ENCODE measurements at regions of chr2 and their contacts with region 1.

Region 1: GRCh38 chr2:73293534-73294171 is at the start of gene EGR4:
- DNase-seq: peak; percentile 59 to 89
- H3K4me3 ChIP-seq: peak within 1 kb of the TSS; percentile 44 to 68 (median 52)
- H3K27ac ChIP-seq: no peak within 1 kb of the TSS
- H3K4me1 ChIP-seq: peaks cover 0 to 11% (median 3%) of the 10 kb centered on the region in 4 experiments; a peak in 4 of 7 replicates
- H3K27me3 ChIP-seq: peaks cover 28 to 64% (median 57%) of the 10 kb centered on the region in 4 experiments
- CTCF ChIP-seq: peak in 1 of 3 experiments; percentile 20; a peak in 1 of 4 replicates
- EP300 ChIP-seq: no peak
- POLR2A ChIP-seq: peak in 1 of 2 experiments; percentile 54; a peak in 1 of 3 replicates
- RAD21 ChIP-seq: no peak; a peak in 1 of 4 replicates
- total RNA-seq, gene EGR4: 0.20 TPM in 1 of 2 replicates, not detected in the other

Region 2: GRCh38 chr2:73163483-73164367 is 129.9 kb before region 1 on chr2:
- CTCF ChIA-PET with region 1: no interaction called
- POLR2A ChIA-PET with region 1: no interaction called
- DNase-seq: peak; percentile 63 to 92
- H3K4me3 ChIP-seq: no peak overlapping the region
- H3K27ac ChIP-seq: no peak overlapping the region
- H3K4me1 ChIP-seq: no peaks in the 10 kb centered on the region
- H3K27me3 ChIP-seq: no peaks in the 10 kb centered on the region
- CTCF ChIP-seq: peak; percentile 87 to 91 (median 89)
- EP300 ChIP-seq: no peak
- POLR2A ChIP-seq: no peak
- RAD21 ChIP-seq: peak; percentile 91

Region 3: GRCh38 chr2:73243884-73244570 is 49.6 kb before region 1 on chr2:
- CTCF ChIA-PET with region 1: interaction called, 11 read pairs
- POLR2A ChIA-PET with region 1: no interaction called
- DNase-seq: no peak
- H3K4me3 ChIP-seq: no peak overlapping the region
- H3K27ac ChIP-seq: no peak overlapping the region
- H3K4me1 ChIP-seq: peaks cover 0 to 2% (median under 1%) of the 10 kb centered on the region in 4 experiments; a peak in 1 of 7 replicates
- H3K27me3 ChIP-seq: no peaks in the 10 kb centered on the region
- CTCF ChIP-seq: no peak
- EP300 ChIP-seq: no peak
- POLR2A ChIP-seq: no peak
- RAD21 ChIP-seq: no peak

Region 4: GRCh38 chr2:73260034-73260984 is 33.3 kb before region 1 on chr2:
- CTCF ChIA-PET with region 1: interaction called, 40 read pairs
- POLR2A ChIA-PET with region 1: interaction called, 4 read pairs
- DNase-seq: peak in 1 of 2 experiments; percentile 80
- H3K4me3 ChIP-seq: no peak overlapping the region
- H3K27ac ChIP-seq: no peak overlapping the region
- H3K4me1 ChIP-seq: peaks cover 0 to 6% (median 3%) of the 10 kb centered on the region in 4 experiments; a peak in 3 of 7 replicates
- H3K27me3 ChIP-seq: no peaks in the 10 kb centered on the region
- CTCF ChIP-seq: peak in 2 of 3 experiments; percentile 67 to 77; a peak in 3 of 4 replicates
- EP300 ChIP-seq: no peak
- POLR2A ChIP-seq: peak in 1 of 2 experiments; percentile 28; a peak in 1 of 3 replicates
- RAD21 ChIP-seq: peak; percentile 71 to 81

Region 5: DNA sequence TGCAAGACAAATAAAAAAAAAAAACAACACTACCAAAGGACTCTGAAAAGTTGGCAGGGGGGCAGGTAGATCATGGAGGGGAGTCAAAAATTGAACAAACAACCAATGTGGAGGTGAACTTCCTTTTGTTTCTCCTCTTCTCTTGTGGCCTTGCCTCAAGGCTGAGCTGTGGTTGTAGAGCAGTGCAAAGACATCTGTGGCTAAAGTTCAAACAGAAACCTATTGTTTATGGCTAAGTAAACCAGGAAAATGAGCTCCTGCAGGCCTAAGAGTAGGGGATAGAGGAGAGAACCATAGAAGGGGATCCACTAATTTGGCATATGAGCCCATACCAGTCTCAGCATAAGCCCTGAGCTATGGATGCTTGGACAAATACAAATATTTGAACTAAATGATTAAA is 39.9 kb after region 1 on chr2:
- CTCF ChIA-PET with region 1: interaction called, 11 read pairs
- POLR2A ChIA-PET with region 1: no interaction called
- DNase-seq: no peak
- H3K4me3 ChIP-seq: no peak overlapping the region
- H3K27ac ChIP-seq: no peak overlapping the region
- H3K4me1 ChIP-seq: no peaks in the 10 kb centered on the region
- H3K27me3 ChIP-seq: no peaks in the 10 kb centered on the region
- CTCF ChIP-seq: no peak
- EP300 ChIP-seq: no peak
- POLR2A ChIP-seq: no peak
- RAD21 ChIP-seq: no peak